ENCODE measurements at regions of chr2 and their contacts with region 1.

Region 1: GRCh38 chr2:121128754-121129659 is 156.0 kb downstream of the TFCP2L1 start:
- DNase-seq: no peak
- ATAC-seq: peak in 2 of 4 donors; percentile 67 to 70
- H3K4me3 ChIP-seq: no peak overlapping the region
- H3K27ac ChIP-seq: no peak overlapping the region
- H3K4me1 ChIP-seq: no peaks in the 10 kb centered on the region
- H3K27me3 ChIP-seq: no peaks in the 10 kb centered on the region
- CTCF ChIP-seq: peak; percentile 43

Region 2: DNA sequence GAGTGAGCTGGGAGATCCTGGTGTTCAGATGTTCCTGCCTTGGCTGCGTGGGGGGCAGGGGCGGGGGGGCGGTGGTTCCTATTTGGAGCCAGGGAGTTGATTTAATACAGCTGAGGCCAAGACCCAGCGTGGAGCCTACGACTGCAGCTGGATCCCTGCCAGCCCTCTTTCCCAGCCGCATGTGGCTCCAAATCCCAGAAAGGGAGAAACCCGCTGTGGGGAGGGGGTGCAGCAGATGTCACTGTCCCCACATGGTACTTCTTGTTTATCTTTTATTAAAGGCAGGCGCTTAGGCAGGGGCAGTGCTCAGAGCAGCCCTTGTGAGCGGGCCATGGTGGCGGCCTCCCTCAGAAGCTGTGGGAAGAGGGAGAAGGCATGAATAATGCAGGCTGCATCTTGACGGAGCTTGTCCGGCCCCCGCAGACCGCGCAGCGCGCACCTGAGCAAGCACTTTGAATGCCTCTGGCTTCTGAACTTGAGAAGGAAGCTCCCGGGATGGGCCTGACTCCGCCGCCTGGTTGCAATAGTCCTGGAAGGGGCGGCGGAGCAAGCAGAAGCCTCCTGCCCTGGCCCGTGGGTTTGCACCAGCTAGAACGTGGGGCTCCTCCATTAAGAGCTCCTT is 281.2 kb before region 1 on chr2:
- intact Hi-C with region 1: no loop called
- DNase-seq: no peak
- ATAC-seq: no peak
- H3K4me3 ChIP-seq: no peak overlapping the region
- H3K27ac ChIP-seq: no peak overlapping the region
- H3K4me1 ChIP-seq: no peaks in the 10 kb centered on the region
- H3K27me3 ChIP-seq: no peaks in the 10 kb centered on the region
- CTCF ChIP-seq: no peak

Region 3: GRCh38 chr2:120892967-120893667 is 235.9 kb before region 1 on chr2:
- intact Hi-C with region 1: no loop called
- DNase-seq: peak in 1 of 2 donors; percentile 73
- ATAC-seq: peak; percentile 79 to 90 (median 88)
- H3K4me3 ChIP-seq: peak overlapping the region; percentile 47
- H3K27ac ChIP-seq: peak overlapping the region; percentile 82
- H3K4me1 ChIP-seq: peaks cover 37% of the 10 kb centered on the region
- H3K27me3 ChIP-seq: no peaks in the 10 kb centered on the region
- CTCF ChIP-seq: no peak

Region 4: DNA sequence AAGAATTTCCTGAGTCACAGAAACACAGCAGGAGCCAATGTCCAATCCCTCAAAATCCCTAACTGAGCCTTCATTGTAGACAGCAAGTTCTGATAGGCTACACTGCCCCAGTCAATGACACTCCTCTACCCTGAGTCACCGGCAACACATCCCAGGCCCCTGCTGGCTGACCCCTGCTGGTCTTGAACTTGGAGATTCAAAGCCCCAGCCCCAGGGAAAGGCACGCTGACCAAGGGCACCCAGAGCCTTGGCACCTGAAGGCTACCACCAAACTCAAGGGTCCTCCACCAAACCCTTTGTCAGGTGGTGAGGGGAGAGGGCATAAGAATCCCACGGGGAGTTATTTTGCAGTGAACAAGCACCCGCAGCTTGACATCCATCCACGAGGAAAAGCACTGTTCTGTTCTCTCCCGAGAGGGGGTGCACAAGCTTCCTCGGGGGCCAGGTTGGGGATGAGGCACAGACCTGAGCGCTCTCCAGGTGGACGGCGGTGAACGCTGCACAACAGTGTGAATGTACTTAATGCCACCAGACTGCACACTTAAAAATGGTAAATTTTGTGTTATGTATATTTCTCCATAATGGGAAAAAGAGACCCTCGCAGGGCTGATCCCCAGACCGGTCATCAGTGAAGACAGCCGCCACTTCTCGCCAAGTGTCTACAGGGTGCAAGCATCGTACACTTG is 109.1 kb after region 1 on chr2:
- intact Hi-C with region 1: no loop called
- DNase-seq: peak in 1 of 2 donors; percentile 12
- ATAC-seq: peak in 1 of 4 donors; percentile 31
- H3K4me3 ChIP-seq: no peak overlapping the region
- H3K27ac ChIP-seq: no peak overlapping the region
- H3K4me1 ChIP-seq: no peaks in the 10 kb centered on the region
- H3K27me3 ChIP-seq: peaks cover 0 to 1% (median 0%) of the 10 kb centered on the region in 3 donors
- CTCF ChIP-seq: no peak

Region 5: DNA sequence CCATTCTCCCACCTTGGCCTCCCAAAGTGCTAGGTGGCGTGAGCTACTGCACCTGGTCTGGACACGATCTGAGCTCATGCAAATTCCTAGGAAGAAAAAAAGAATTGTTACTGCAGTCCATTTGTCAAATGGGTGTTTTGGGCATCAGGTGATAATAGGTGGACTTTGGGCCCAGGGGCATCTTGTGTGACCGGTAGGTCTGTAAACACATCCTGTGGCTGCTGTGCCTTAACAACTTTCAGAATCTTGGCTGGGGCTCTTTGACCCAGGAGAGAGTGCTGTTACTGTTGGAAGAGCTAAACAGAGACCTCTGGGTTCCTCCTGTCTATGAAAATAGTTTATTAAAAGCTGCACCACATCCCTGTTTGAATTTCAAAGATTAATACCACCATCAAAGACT is 190.9 kb after region 1 on chr2:
- intact Hi-C with region 1: loop called (anchors 5 to 10 kb)
- DNase-seq: no peak
- ATAC-seq: no peak
- H3K4me3 ChIP-seq: no peak overlapping the region
- H3K27ac ChIP-seq: no peak overlapping the region
- H3K4me1 ChIP-seq: no peaks in the 10 kb centered on the region
- H3K27me3 ChIP-seq: no peaks in the 10 kb centered on the region
- CTCF ChIP-seq: no peak

Region 6: GRCh38 chr2:121333834-121334558 is 205.0 kb after region 1 on chr2:
- intact Hi-C with region 1: loop called in 1 of 2 experiments (anchors 10 kb)
- DNase-seq: no peak
- ATAC-seq: no peak
- H3K4me3 ChIP-seq: no peak overlapping the region
- H3K27ac ChIP-seq: no peak overlapping the region
- H3K4me1 ChIP-seq: peaks cover 9% of the 10 kb centered on the region
- H3K27me3 ChIP-seq: no peaks in the 10 kb centered on the region
- CTCF ChIP-seq: no peak

Measured in psoas muscle (tissue), 8 donors.